Sigmoid colon (tissue), 7 donors: ENCODE measurements at regions of chr2 and their contacts with region 1.

Region 1: DNA sequence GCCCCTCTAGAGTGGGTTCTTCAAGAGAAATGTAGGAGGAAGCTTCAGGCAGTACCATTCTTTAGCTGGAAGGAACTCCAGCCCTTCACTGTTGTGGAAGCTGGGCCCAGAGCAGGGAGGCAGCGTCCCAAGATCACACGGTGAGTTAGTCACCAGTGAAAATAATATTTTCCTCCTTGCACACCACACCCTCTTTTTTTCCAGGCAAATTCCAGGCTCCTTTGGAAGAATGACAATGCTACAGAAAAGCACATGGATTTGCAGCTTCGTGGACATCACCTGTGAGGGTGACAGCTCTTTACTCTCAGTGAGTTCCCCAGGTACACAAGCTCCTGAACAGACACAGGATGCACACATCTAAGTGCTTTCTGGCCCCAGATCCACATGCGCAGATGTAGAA is 157.1 kb downstream of the COL6A3 start:
- DNase-seq: peak; percentile 88
- H3K4me3 ChIP-seq: no peak overlapping the region
- H3K27ac ChIP-seq: peak overlapping the region; percentile 66 to 85 (median 76)
- H3K4me1 ChIP-seq: peaks cover 0 to 72% (median 57%) of the 10 kb centered on the region in 4 donors
- H3K27me3 ChIP-seq: no peaks in the 10 kb centered on the region
- CTCF ChIP-seq: no peak
- EP300 ChIP-seq: no peak
- POLR2A ChIP-seq: no peak

Region 2: GRCh38 chr2:237201461-237202287 is 55.2 kb before region 1 on chr2:
- intact Hi-C with region 1: no loop called
- DNase-seq: peak; percentile 67
- H3K4me3 ChIP-seq: no peak overlapping the region
- H3K27ac ChIP-seq: peak overlapping the region; percentile 12 to 30 (median 22)
- H3K4me1 ChIP-seq: peaks cover 0 to 47% (median 41%) of the 10 kb centered on the region in 4 donors
- H3K27me3 ChIP-seq: no peaks in the 10 kb centered on the region
- CTCF ChIP-seq: no peak
- EP300 ChIP-seq: no peak
- POLR2A ChIP-seq: no peak

Region 3: GRCh38 chr2:237213315-237214022 is 43.4 kb before region 1 on chr2:
- intact Hi-C with region 1: loop called (anchors 5 kb)
- DNase-seq: peak; percentile 90
- H3K4me3 ChIP-seq: no peak overlapping the region
- H3K27ac ChIP-seq: peak overlapping the region in 3 of 4 donors; percentile 54 to 74 (median 66)
- H3K4me1 ChIP-seq: peaks cover 0 to 26% (median 22%) of the 10 kb centered on the region in 4 donors
- H3K27me3 ChIP-seq: no peaks in the 10 kb centered on the region
- CTCF ChIP-seq: no peak
- EP300 ChIP-seq: no peak
- POLR2A ChIP-seq: no peak

Region 4: DNA sequence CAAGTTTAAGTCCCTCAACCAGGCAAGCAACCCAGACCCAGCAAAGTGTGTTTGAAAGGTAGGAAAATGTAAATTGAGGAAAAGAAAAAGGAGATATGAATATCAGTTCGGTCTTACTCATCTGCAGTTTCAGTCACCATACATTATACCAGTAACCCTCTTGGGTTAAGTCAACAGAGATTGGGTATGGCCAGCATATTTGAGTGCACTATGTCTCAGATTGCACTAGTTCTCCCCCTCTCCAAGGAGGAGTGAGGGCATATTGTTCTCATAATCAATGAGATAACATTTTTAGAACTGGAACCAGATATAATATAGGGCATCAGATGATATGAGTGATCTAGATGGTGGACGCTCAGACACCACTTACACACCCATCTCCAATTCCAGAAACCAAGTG is 29.7 kb before region 1 on chr2:
- intact Hi-C with region 1: no loop called
- DNase-seq: no peak
- H3K4me3 ChIP-seq: no peak overlapping the region
- H3K27ac ChIP-seq: peak overlapping the region in 2 of 4 donors; percentile 17 to 42
- H3K4me1 ChIP-seq: peaks cover 0 to 38% (median 18%) of the 10 kb centered on the region in 4 donors
- H3K27me3 ChIP-seq: no peaks in the 10 kb centered on the region
- CTCF ChIP-seq: no peak
- EP300 ChIP-seq: no peak
- POLR2A ChIP-seq: no peak